H1 (cell line): ENCODE measurements at regions of chr16 and their contacts with region 1.

Region 1: DNA sequence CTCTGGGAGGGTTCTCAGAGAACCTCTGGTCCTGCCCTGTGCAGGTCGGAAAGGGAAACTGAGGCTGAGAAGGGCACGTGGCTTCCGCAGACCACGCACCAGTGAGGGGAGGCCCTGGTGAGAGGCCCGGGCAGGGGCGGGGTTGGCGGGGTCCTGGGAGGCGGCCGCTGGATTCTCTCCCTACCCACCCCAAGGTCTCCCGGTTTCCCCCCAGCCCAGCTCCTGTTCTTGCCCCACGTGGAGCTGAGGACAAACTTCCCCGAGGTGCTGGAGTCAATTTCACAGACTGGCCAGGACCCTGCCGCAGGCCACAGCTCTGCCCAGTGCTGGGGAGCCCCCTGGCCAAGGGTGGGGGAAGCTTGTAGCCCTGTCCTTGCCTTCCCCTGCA is 11.5 kb downstream of the CCL17 start:
- DNase-seq: no peak
- H3K4me3 ChIP-seq: peak overlapping the region in 2 of 4 experiments; percentile 19 to 57; a peak in 5 of 8 replicates
- H3K27ac ChIP-seq: no peak overlapping the region
- H3K4me1 ChIP-seq: peaks cover 0 to 12% (median 7%) of the 10 kb centered on the region in 4 experiments; a peak in 6 of 7 replicates
- H3K27me3 ChIP-seq: no peaks in the 10 kb centered on the region
- CTCF ChIP-seq: no peak
- EP300 ChIP-seq: no peak
- POLR2A ChIP-seq: no peak
- RAD21 ChIP-seq: no peak

Region 2: DNA sequence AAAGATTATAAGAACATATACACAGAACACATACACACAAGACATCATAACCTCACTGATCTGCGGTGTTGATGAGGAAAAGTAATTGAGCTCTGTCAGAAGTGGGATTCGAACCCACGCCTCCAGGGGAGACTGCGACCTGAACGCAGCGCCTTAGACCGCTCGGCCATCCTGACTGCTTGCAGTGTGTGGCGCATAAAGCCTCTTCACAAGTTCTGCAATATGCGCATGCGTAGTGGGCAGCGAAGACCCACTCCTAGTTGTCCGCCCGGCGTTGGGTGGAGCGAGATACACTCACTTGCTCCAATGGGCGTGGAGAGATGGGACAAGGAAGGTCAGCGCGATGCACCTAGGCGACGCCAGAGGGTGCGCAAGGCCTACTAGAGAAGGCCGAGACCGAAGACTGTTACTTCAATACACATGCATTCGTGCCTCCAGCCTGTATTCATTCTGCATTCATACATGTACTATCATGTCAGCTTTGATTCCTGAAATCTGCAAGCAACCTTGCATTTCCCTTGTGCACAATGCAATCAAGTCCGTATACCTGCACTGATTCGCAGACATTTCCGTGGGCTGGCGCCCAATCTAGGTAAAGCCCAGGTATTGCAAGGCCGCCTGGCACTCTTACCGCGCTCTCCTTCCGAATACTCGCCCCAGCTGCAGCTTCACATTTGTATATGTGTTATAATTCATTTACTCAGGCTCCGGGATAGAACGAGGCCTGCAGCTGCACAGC is 115.6 kb before region 1 on chr16:
- CTCF ChIA-PET with region 1: interaction called, 513 read pairs
- POLR2A ChIA-PET with region 1: interaction called, 47 read pairs
- DNase-seq: peak; percentile 98 to 100
- H3K4me3 ChIP-seq: peak overlapping the region; percentile 76 to 90 (median 82)
- H3K27ac ChIP-seq: no peak overlapping the region
- H3K4me1 ChIP-seq: peaks cover 0 to 5% (median 2%) of the 10 kb centered on the region in 4 experiments; a peak in 3 of 7 replicates
- H3K27me3 ChIP-seq: peaks cover 0 to 6% (median 2%) of the 10 kb centered on the region in 4 experiments; a peak in 2 of 7 replicates
- CTCF ChIP-seq: peak; percentile 92 to 100 (median 98)
- EP300 ChIP-seq: no peak; a peak in 1 of 3 replicates
- POLR2A ChIP-seq: no peak
- RAD21 ChIP-seq: peak; percentile 97 to 99

Region 3: GRCh38 chr16:57367116-57367752 is 48.9 kb before region 1 on chr16:
- CTCF ChIA-PET with region 1: interaction called, 31 read pairs
- POLR2A ChIA-PET with region 1: interaction called, 4 read pairs
- DNase-seq: no peak
- H3K4me3 ChIP-seq: no peak overlapping the region
- H3K27ac ChIP-seq: no peak overlapping the region
- H3K4me1 ChIP-seq: peaks cover 0 to 5% (median 4%) of the 10 kb centered on the region in 4 experiments; a peak in 5 of 7 replicates
- H3K27me3 ChIP-seq: peaks cover 0 to 2% (median 0%) of the 10 kb centered on the region in 4 experiments; a peak in 1 of 7 replicates
- CTCF ChIP-seq: no peak
- EP300 ChIP-seq: no peak
- POLR2A ChIP-seq: no peak
- RAD21 ChIP-seq: no peak

Region 4: GRCh38 chr16:57394444-57394843 is 21.7 kb before region 1 on chr16:
- CTCF ChIA-PET with region 1: interaction called, 71 read pairs
- POLR2A ChIA-PET with region 1: interaction called, 3 read pairs
- DNase-seq: no peak
- H3K4me3 ChIP-seq: no peak overlapping the region
- H3K27ac ChIP-seq: no peak overlapping the region
- H3K4me1 ChIP-seq: no peaks in the 10 kb centered on the region
- H3K27me3 ChIP-seq: no peaks in the 10 kb centered on the region
- CTCF ChIP-seq: no peak
- EP300 ChIP-seq: no peak
- POLR2A ChIP-seq: no peak
- RAD21 ChIP-seq: no peak

Region 5: DNA sequence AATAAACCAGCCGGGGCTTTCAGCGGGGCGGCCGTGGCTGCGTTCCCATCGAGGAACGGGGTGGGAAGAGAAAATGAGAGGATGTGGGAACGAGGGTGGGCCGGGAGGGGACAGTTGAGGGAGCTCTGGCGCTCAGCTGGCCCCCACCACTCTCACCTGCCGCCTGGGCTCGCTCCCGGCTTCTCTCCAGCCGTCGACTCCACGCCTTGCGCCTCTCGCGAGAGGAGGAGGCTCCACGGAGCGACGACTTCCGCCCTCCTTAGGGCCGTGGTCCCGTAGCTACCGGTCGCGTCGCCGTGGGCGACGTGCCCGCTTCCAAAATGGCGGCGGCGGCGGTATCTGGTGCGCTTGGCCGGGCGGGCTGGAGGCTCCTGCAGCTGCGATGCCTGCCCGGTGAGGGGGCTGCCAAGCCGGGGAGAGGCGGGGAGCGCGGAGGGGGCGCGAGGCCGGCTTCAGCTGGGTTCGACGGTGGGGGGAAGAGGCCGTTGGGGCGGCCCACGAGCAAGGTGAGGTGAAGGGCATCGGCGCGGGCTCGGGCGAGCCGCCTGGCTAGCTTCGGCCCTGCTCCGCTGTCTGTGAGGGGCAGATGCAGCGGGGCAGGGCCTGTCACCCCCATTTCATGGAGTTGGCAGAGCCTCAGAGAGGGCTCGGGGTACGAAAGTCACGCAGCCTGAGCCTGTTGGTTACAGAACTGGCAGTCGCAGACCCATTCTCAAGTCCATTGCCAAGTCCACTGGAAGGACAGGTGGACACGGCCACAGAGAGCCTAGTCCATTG is 31.3 kb after region 1 on chr16 and contains the starts of genes CIAPIN1 and COQ9:
- CTCF ChIA-PET with region 1: interaction called, 27 read pairs
- POLR2A ChIA-PET with region 1: interaction called, 6 read pairs
- DNase-seq: peak; percentile 73 to 90
- H3K4me3 ChIP-seq: peak within 1 kb of the TSS; percentile 80 to 97 (median 96)
- H3K27ac ChIP-seq: peak within 1 kb of the TSS; percentile 73
- H3K4me1 ChIP-seq: peaks cover 0 to 3% (median 3%) of the 10 kb centered on the region in 4 experiments; a peak in 5 of 7 replicates
- H3K27me3 ChIP-seq: no peaks in the 10 kb centered on the region
- CTCF ChIP-seq: no peak
- EP300 ChIP-seq: no peak
- POLR2A ChIP-seq: peak; percentile 76 to 95
- RAD21 ChIP-seq: no peak
- total RNA-seq, gene CIAPIN1: 83.6 and 90.7 TPM in 2 replicates
- total RNA-seq, gene COQ9: 31.7 and 33.3 TPM in 2 replicates

Region 6: DNA sequence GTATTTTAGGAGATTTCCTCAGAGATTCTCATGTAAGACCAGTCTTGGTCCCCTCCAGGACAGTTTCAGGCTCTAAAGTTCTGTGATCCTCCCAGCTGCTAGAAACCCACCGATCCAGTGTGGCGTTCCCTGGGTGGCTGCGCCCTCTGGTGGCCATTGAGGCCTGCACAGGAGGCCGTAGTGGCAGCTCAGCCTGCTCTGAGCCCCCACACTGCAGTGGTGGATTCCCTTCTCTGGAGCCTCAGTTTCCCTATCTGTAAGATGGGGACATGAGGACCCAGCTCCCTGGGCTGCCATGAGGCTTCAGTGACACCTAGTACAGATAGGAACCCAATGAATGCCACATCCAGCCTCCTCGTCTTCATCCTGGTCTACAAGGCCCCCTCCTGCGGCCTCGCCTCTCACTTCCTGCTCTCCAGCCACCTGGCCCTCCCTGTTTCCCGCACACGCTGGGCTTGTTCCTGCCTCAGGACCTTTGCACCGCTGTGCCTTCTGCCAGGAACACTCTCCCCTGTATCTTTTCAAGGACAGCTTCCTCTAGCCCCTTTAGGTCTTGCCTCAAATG is 103.8 kb after region 1 on chr16:
- CTCF ChIA-PET with region 1: interaction called, 46 read pairs
- POLR2A ChIA-PET with region 1: interaction called, 5 read pairs
- DNase-seq: peak in 1 of 2 experiments; percentile 93
- H3K4me3 ChIP-seq: no peak overlapping the region
- H3K27ac ChIP-seq: no peak overlapping the region
- H3K4me1 ChIP-seq: peaks cover 0 to 2% (median 0%) of the 10 kb centered on the region in 4 experiments; a peak in 1 of 7 replicates
- H3K27me3 ChIP-seq: peaks cover 0 to 2% (median 0%) of the 10 kb centered on the region in 4 experiments; a peak in 2 of 7 replicates
- CTCF ChIP-seq: peak; percentile 96 to 99 (median 97)
- EP300 ChIP-seq: no peak
- POLR2A ChIP-seq: no peak
- RAD21 ChIP-seq: peak; percentile 94 to 97

Region 7: DNA sequence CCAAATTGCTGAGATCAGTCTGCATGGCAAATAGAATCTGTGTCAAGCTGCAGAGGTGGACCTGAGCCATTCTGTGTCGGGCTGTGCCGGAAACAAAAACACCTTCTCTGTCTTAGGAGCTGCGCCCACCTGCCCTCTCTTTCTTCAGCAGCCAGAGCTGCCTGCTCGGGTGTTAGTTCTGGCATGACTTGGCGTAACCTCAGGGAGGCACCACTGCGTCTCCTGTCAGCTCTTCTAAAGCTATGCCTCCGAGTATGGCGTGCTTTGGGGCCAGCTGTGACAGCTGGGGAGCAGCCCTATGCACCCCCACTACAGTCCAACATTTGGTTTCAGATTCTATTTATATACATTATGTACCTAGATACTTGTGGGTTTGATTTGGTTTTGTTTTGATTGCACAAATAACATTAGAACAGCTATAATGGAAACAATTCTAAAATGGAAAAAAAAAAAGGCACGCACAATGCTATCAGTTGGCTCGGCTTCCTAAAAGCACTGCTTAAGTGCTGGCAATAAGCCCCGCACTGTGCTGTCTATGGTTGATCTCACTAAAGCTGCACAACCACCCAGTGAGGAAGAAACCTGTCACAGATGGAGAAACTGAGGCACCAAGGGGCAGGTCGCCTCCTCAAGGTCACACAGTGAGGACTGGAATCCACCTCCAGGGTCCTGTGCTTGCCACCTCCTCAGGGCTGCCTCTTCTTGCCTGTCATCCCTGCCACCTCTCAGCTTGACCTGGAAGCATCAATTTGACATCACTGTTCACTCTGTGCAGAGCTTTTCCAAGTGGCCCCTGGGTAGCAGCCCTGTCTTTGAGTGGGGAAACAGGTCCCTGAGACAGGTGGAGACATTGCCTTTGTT is 193.7 kb after region 1 on chr16:
- CTCF ChIA-PET with region 1: no interaction called
- POLR2A ChIA-PET with region 1: no interaction called
- DNase-seq: peak in 1 of 2 experiments; percentile 41
- H3K4me3 ChIP-seq: no peak overlapping the region
- H3K27ac ChIP-seq: no peak overlapping the region
- H3K4me1 ChIP-seq: no peaks in the 10 kb centered on the region
- H3K27me3 ChIP-seq: 0 out of 7 replicates have a peak, but pooled peaks cover 0 to 2% (median 0%) of the 10 kb centered on the region in 4 experiments
- CTCF ChIP-seq: peak; percentile 19 to 33 (median 29)
- EP300 ChIP-seq: no peak
- POLR2A ChIP-seq: no peak
- RAD21 ChIP-seq: peak; percentile 33 to 49; a peak in 3 of 4 replicates